ENCODE measurements at regions of chr4 and their contacts with region 1.

Region 1: GRCh38 chr4:127880764-127881562 is at the start of gene PLK4:
- DNase-seq: peak; percentile 96
- H3K4me3 ChIP-seq: peak within 1 kb of the TSS; percentile 97
- H3K4me3 Mint-ChIP-seq: peak within 1 kb of the TSS; percentile 93
- H3K27ac Mint-ChIP-seq: peak within 1 kb of the TSS; percentile 99
- H3K4me1 ChIP-seq: no peaks in the 10 kb centered on the region; the same call in none of the 2 replicates
- H3K4me1 Mint-ChIP-seq: no peaks in the 10 kb centered on the region
- H3K27me3 ChIP-seq: no peaks in the 10 kb centered on the region
- H3K27me3 Mint-ChIP-seq: no peaks in the 10 kb centered on the region
- CTCF ChIP-seq: no peak
- total RNA-seq, gene PLK4: 28.2 and 31.1 TPM in 2 replicates

Region 2: DNA sequence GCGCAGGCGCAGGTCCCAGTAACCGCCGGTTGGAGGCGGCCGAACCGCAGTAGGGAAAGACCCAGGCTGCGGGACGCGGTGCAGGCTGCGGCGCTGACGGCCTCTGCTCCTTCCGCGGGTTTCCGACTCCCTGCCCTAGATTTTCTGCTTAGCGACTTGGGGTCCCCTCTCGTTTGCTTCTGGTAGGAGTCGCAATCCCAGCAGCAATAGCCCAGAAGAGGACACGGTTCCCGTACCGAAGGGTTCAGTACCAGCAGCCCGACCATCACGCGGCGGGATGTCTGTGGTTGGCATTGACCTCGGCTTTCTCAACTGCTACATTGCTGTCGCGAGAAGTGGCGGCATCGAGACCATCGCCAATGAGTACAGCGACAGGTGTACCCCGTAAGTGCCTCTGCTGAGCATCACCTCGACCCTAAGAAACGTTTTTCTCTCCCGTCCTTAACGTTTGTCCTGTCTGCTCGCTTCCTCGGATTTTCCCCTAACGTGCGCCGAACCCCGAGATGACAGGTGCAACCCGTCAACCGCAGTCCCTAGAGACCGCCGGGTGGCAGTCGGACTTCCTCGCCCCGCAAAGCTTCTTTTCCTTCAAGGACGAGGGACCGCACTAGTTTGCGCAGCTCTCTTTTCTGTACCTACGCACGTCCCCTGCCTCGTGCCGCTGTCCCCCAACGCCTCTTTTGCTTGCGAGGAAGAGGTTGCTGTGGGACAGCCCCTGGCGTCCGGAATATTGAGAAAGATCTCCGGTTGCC is 98.5 kb before region 1 on chr4 and contains the start of gene HSPA4L:
- CTCF ChIA-PET with region 1: interaction called, 3 read pairs
- POLR2A ChIA-PET with region 1: interaction called, 13 read pairs
- intact Hi-C with region 1: loop called (anchors 5 kb)
- DNase-seq: peak; percentile 36 to 37
- H3K4me3 ChIP-seq: peak within 1 kb of the TSS; percentile 59
- H3K4me3 Mint-ChIP-seq: peak within 1 kb of the TSS; percentile 97
- H3K27ac Mint-ChIP-seq: peak within 1 kb of the TSS; percentile 90
- H3K4me1 ChIP-seq: peaks cover 13% of the 10 kb centered on the region; the same call in 1 of the 2 replicates
- H3K4me1 Mint-ChIP-seq: peaks cover 7% of the 10 kb centered on the region
- H3K27me3 ChIP-seq: no peaks in the 10 kb centered on the region
- H3K27me3 Mint-ChIP-seq: peaks cover 3% of the 10 kb centered on the region
- CTCF ChIP-seq: peak in 1 of 2 experiments; percentile 23
- total RNA-seq, gene HSPA4L: 3.3 and 3.6 TPM in 2 replicates

Region 3: DNA sequence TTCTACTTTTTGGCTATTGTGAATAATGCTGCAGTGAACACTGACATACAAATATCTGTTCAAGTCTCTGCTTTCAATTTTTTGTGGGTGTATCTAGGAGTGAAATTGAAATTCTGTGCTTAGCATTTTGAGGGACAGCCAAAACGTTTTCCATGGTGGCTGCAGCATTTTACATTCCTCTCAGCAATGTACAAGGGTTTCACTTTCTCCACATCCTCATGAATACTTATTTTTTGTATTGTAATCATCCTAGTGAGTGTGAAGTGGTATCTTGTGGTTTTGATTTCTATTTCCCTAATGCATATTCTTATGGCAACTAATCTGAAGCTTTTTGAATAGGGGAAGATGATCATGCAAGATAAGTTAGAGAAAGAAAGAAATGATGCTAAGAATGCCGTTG is 58.5 kb before region 1 on chr4:
- CTCF ChIA-PET with region 1: no interaction called
- POLR2A ChIA-PET with region 1: no interaction called
- intact Hi-C with region 1: no loop called
- DNase-seq: no peak
- H3K4me3 ChIP-seq: no peak overlapping the region
- H3K4me3 Mint-ChIP-seq: no peak overlapping the region
- H3K27ac Mint-ChIP-seq: no peak overlapping the region
- H3K4me1 ChIP-seq: no peaks in the 10 kb centered on the region
- H3K4me1 Mint-ChIP-seq: no peaks in the 10 kb centered on the region
- H3K27me3 ChIP-seq: no peaks in the 10 kb centered on the region
- H3K27me3 Mint-ChIP-seq: no peaks in the 10 kb centered on the region
- CTCF ChIP-seq: no peak